AG04450 (cell line): ENCODE measurements at regions of chr6 and their contacts with region 1.

Region 1: DNA sequence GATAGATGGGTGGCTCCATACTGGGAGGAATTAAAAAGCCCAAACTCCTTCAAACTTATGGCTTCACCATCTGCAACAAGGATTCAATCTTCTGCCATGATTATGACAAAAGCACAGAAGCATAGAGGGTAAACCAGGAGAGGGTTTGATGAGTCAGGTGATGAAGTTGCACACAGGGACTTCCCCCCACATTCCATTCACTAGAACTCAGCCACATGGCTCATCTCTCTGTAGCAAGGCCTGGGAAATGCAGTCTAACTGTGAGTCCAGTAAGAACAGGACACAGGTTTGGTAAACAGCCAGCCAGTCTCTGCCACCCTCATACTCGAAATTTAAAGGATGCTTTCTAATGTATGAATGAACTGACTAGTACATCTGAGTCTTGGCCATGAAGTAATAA is 142.9 kb downstream of the HIVEP2 start:
- DNase-seq: peak; percentile 94
- H3K4me3 ChIP-seq: no peak overlapping the region
- H3K27ac ChIP-seq: peak overlapping the region; percentile 62
- H3K27me3 ChIP-seq: no peaks in the 10 kb centered on the region
- CTCF ChIP-seq: no peak

Region 2: GRCh38 chr6:142881761-142882160 is 79.6 kb after region 1 on chr6:
- CTCF ChIA-PET with region 1: no interaction called
- POLR2A ChIA-PET with region 1: interaction called, 10 read pairs
- DNase-seq: no peak
- H3K4me3 ChIP-seq: no peak overlapping the region
- H3K27ac ChIP-seq: no peak overlapping the region
- H3K27me3 ChIP-seq: no peaks in the 10 kb centered on the region
- CTCF ChIP-seq: no peak